GM12878 (cell line): ENCODE measurements at regions of chr19 and their contacts with region 1.

Region 1: GRCh38 chr19:43784981-43785808 is 4.4 kb upstream of the KCNN4 start:
- DNase-seq: no peak
- ATAC-seq: peak; percentile 70
- H3K4me3 ChIP-seq: no peak overlapping the region
- H3K27ac ChIP-seq: peak overlapping the region; percentile 74
- H3K4me1 ChIP-seq: peaks cover 49% of the 10 kb centered on the region
- H3K27me3 ChIP-seq: no peaks in the 10 kb centered on the region
- CTCF ChIP-seq: peak; percentile 98 to 100 (median 100); a peak in 5 of 6 replicates
- EP300 ChIP-seq: no peak
- POLR2A ChIP-seq: no peak
- RAD21 ChIP-seq: peak; percentile 95

Region 2: GRCh38 chr19:43723588-43723987 is 61.6 kb before region 1 on chr19:
- CTCF ChIA-PET with region 1: interaction called, 4 read pairs
- POLR2A ChIA-PET with region 1: interaction called, 11 read pairs
- RAD21 ChIA-PET with region 1: interaction called, 4 read pairs
- SMC1A ChIA-PET with region 1: no interaction called
- in situ Hi-C with region 1: no loop called
- intact Hi-C with region 1: no loop called
- DNase-seq: no peak
- ATAC-seq: no peak
- H3K4me3 ChIP-seq: no peak overlapping the region
- H3K27ac ChIP-seq: no peak overlapping the region
- H3K4me1 ChIP-seq: peaks cover 26% of the 10 kb centered on the region
- H3K27me3 ChIP-seq: no peaks in the 10 kb centered on the region
- CTCF ChIP-seq: 0 out of 6 replicates have a peak, but pooled peaks of 2 of the 3 experiments have one; percentile 9 to 24
- EP300 ChIP-seq: no peak
- POLR2A ChIP-seq: no peak
- RAD21 ChIP-seq: no peak; the same call in 1 of the 2 replicates

Region 3: GRCh38 chr19:43743022-43743421 is 42.2 kb before region 1 on chr19:
- CTCF ChIA-PET with region 1: interaction called, 144 read pairs
- POLR2A ChIA-PET with region 1: interaction called, 79 read pairs
- RAD21 ChIA-PET with region 1: interaction called, 118 read pairs
- SMC1A ChIA-PET with region 1: interaction called, 69 read pairs
- in situ Hi-C with region 1: loop called (anchors 5 kb)
- intact Hi-C with region 1: loop called (anchors 1 kb)
- DNase-seq: no peak
- ATAC-seq: no peak
- H3K4me3 ChIP-seq: no peak overlapping the region
- H3K27ac ChIP-seq: no peak overlapping the region
- H3K4me1 ChIP-seq: peaks cover 19% of the 10 kb centered on the region
- H3K27me3 ChIP-seq: no peaks in the 10 kb centered on the region
- CTCF ChIP-seq: no peak
- EP300 ChIP-seq: no peak
- POLR2A ChIP-seq: no peak
- RAD21 ChIP-seq: no peak

Region 4: DNA sequence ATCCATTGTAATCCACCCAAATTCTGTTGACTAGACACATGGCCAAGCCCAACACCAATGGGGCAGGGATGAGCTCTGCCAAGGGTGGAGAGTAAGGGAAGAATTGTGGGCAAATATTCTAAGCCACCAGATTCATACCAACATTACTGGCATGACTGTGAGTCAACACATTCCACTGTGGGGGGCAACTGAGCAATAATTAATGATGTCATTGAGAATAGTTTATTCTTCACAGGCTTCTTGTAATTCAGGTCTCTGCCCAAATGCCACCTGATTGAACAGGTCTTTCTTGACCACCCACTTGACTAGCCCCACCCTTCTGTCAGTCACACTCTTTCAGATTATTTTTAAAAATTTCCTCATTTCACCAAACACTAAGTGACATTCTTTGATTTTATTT is 70.4 kb after region 1 on chr19:
- CTCF ChIA-PET with region 1: no interaction called
- POLR2A ChIA-PET with region 1: no interaction called
- RAD21 ChIA-PET with region 1: no interaction called
- SMC1A ChIA-PET with region 1: no interaction called
- in situ Hi-C with region 1: no loop called
- intact Hi-C with region 1: no loop called
- DNase-seq: no peak
- ATAC-seq: no peak
- H3K4me3 ChIP-seq: no peak overlapping the region
- H3K27ac ChIP-seq: no peak overlapping the region
- H3K4me1 ChIP-seq: no peaks in the 10 kb centered on the region
- H3K27me3 ChIP-seq: no peaks in the 10 kb centered on the region
- CTCF ChIP-seq: no peak
- EP300 ChIP-seq: no peak
- POLR2A ChIP-seq: no peak
- RAD21 ChIP-seq: no peak

Region 5: GRCh38 chr19:43872547-43873336 is 87.5 kb after region 1 on chr19:
- CTCF ChIA-PET with region 1: no interaction called
- POLR2A ChIA-PET with region 1: no interaction called
- RAD21 ChIA-PET with region 1: no interaction called
- SMC1A ChIA-PET with region 1: no interaction called
- in situ Hi-C with region 1: no loop called
- intact Hi-C with region 1: no loop called
- DNase-seq: no peak
- ATAC-seq: no peak
- H3K4me3 ChIP-seq: no peak overlapping the region
- H3K27ac ChIP-seq: no peak overlapping the region
- H3K4me1 ChIP-seq: no peaks in the 10 kb centered on the region
- H3K27me3 ChIP-seq: no peaks in the 10 kb centered on the region
- CTCF ChIP-seq: no peak
- EP300 ChIP-seq: no peak
- POLR2A ChIP-seq: no peak
- RAD21 ChIP-seq: no peak

Region 6: DNA sequence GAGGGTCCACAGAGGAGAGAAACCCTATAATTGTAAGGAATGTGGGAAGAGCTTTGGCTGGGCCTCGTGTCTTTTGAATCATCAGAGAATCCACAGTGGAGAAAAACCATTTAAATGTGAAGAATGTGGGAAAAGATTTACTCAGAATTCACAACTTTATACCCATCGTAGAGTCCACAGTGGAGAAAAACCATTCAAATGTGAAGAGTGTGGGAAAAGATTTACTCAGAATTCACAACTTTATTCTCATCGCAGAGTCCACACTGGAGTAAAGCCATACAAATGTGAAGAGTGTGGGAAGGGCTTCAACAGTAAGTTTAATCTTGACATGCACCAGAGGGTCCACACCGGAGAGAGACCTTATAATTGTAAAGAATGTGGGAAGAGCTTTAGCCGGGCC is 346.8 kb after region 1 on chr19:
- CTCF ChIA-PET with region 1: no interaction called
- POLR2A ChIA-PET with region 1: no interaction called
- RAD21 ChIA-PET with region 1: no interaction called
- SMC1A ChIA-PET with region 1: no interaction called
- in situ Hi-C with region 1: no loop called
- intact Hi-C with region 1: no loop called
- DNase-seq: no peak
- ATAC-seq: no peak
- H3K4me3 ChIP-seq: no peak overlapping the region
- H3K27ac ChIP-seq: no peak overlapping the region
- H3K4me1 ChIP-seq: no peaks in the 10 kb centered on the region
- H3K27me3 ChIP-seq: no peaks in the 10 kb centered on the region
- CTCF ChIP-seq: no peak
- EP300 ChIP-seq: no peak
- POLR2A ChIP-seq: no peak
- RAD21 ChIP-seq: no peak